Posterior cingulate gyrus (tissue), 11 donors: ENCODE measurements at regions of chr9 and their contacts with region 1.

Region 1: DNA sequence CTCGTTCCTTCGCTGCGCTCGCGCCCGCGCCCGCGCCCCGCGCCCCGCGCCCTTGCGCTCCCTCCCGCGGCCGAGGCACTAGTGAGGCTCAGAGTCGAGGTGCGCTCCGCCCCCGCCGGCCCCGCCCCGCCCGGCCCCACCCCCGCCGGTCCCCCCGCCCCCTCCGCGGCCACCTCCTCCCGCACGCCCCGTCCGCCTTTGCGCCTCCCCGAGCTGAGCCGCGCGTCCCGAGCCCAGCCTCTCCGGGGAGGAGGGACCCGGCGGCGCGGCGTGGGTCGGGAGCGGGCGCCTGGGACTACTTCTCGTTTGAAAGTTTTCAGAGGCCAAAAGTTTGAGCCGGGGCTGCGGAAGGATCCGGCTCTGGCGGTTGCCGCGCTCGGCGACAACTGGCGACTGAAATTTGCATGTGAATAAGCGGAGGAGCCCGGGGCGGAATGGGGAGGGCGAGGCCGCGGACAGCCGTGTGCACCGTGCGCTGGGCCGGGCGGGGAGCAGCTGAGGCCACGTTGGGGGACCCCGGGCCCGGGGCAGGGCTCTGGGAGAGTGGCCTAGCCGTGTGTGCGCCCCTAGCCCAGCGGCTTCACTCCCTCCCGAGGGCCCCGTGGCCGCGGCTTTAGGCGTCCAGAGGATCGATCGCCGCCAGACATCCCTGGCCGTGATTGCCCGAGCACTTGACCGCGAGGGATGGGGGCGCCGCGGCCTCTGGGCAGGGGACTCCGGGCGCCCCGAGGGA is at the start of gene NOTCH1:
- DNase-seq: peak; percentile 70 to 97 (median 81)

Region 2: DNA sequence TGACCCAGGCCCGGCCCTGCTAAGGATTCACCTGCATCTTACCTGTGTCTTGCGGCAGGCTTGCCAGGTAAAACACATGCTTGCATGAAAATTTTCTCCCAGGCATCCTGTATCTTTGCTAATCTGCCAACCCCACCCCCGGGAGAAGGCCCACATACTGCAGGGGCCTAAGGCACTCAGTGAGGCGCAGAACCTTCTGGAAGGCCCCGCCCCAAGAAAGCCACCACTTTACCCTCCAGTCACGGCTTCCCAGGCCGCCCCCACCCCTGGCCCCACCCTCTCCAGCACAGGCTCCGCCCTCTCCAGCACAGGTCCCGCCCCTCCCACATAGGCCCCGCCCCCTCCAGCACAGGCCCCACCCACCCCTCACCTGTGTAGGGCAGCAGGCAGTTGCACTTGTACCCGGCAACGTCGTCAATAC is 33.5 kb before region 1 on chr9:
- intact Hi-C with region 1: loop called (anchors 5 kb)
- DNase-seq: no peak

Region 3: GRCh38 chr9:136527721-136528691 is 18.1 kb before region 1 on chr9:
- intact Hi-C with region 1: loop called (anchors 1 kb)
- DNase-seq: no peak

Region 4: DNA sequence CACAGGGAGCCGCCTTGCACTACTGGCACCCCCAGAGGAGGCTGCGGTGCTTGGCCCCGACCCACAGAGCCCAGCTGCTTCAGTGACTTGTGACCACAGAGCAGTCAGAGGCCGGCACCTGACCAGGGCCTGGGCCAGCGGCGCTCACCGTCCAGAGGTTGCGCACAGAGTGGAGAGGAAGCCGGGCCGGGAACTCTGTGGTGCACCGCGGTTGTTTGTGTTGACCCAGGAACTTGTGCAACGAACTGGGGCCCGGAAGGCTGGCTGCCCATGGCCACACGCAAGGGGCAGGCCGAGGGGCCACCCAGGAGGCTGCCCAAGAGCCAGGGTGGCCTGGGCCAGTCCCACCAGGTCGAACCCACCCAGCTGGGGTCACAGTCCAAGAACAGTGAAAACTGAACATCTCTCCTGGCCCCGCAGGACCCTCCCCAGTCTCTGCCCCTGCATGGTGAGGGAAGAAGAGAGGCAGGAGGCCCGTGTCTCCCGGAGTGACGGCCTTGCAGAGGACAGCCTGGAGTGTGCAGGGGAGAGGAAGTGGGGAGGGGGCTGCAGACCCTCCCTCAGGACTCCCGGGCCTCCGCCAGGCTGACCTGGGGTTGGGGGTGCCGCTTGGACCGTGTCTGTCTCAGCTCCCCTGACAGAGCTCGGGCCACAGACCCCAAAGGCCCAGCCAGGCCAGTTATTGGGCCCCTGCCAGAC is 73.8 kb after region 1 on chr9:
- intact Hi-C with region 1: loop called (anchors 10 kb)
- DNase-seq: peak in 4 of 10 donors; percentile 35 to 91 (median 43)